Caco-2 (cell line): ENCODE measurements at regions of chr2 and their contacts with region 1.

Region 1: DNA sequence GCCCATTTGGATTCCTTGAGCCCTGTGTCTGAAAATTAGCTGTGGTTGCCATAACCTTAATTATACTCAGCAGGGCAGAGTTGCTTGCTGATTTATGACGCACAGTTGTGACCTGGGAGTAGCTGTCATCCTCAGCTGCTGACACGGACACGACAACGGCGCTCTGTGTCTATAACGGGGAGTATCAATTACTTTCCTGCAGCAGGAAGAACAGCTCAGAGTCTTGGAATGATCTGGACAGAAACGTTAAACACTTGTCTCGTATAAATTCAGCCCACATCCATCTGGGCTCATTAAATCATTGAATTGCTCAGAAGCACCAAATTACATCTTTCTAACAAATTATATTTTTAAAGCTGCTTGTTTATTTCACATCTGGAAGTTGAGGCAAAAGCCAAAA is 116.3 kb downstream of the SEPTIN10 start:
- DNase-seq: no peak
- H3K4me3 ChIP-seq: no peak overlapping the region
- H3K4me3 Mint-ChIP-seq: no peak overlapping the region
- H3K27ac Mint-ChIP-seq: no peak overlapping the region
- H3K4me1 ChIP-seq: no peaks in the 10 kb centered on the region
- H3K4me1 Mint-ChIP-seq: peaks cover 7% of the 10 kb centered on the region
- H3K27me3 ChIP-seq: no peaks in the 10 kb centered on the region
- H3K27me3 Mint-ChIP-seq: peaks cover 3% of the 10 kb centered on the region
- CTCF ChIP-seq: no peak

Region 2: GRCh38 chr2:109260886-109261700 is 236.4 kb before region 1 on chr2:
- CTCF ChIA-PET with region 1: no interaction called
- POLR2A ChIA-PET with region 1: no interaction called
- intact Hi-C with region 1: no loop called
- DNase-seq: no peak
- H3K4me3 ChIP-seq: no peak overlapping the region
- H3K4me3 Mint-ChIP-seq: no peak overlapping the region
- H3K27ac Mint-ChIP-seq: no peak overlapping the region
- H3K4me1 ChIP-seq: no peaks in the 10 kb centered on the region
- H3K4me1 Mint-ChIP-seq: peaks cover 7% of the 10 kb centered on the region
- H3K27me3 ChIP-seq: no peaks in the 10 kb centered on the region; the same call in 1 of the 2 replicates
- H3K27me3 Mint-ChIP-seq: peaks cover 3% of the 10 kb centered on the region
- CTCF ChIP-seq: peak; percentile 17 to 49

Region 3: GRCh38 chr2:109475531-109476210 is 21.8 kb before region 1 on chr2:
- CTCF ChIA-PET with region 1: interaction called, 10 read pairs
- POLR2A ChIA-PET with region 1: no interaction called
- intact Hi-C with region 1: no loop called
- DNase-seq: no peak
- H3K4me3 ChIP-seq: no peak overlapping the region
- H3K4me3 Mint-ChIP-seq: no peak overlapping the region
- H3K27ac Mint-ChIP-seq: no peak overlapping the region
- H3K4me1 ChIP-seq: 0 out of 2 replicates have a peak, but pooled peaks cover 3% of the 10 kb centered on the region
- H3K4me1 Mint-ChIP-seq: peaks cover 1% of the 10 kb centered on the region
- H3K27me3 ChIP-seq: no peaks in the 10 kb centered on the region
- H3K27me3 Mint-ChIP-seq: peaks cover 4% of the 10 kb centered on the region
- CTCF ChIP-seq: no peak

Region 4: DNA sequence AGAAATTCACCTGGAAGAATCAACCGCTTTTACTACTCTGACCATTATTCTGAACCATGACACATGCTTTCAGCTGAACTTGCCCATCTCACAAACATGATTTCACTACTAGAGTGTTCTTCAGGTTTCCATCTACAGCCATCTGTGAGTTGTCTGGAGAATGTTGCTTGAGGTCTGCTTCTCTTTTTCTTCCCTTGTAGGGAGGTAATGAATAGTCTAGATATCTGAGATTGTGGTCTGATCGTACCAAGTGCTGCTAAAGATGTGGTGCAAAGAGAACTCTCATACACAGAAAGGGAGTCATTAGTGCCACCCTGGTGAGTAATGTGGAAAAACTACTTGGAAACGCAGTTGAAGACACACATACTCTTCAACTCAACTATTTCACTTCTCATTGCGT is 126.9 kb after region 1 on chr2:
- CTCF ChIA-PET with region 1: no interaction called
- POLR2A ChIA-PET with region 1: no interaction called
- intact Hi-C with region 1: no loop called
- DNase-seq: no peak
- H3K4me3 ChIP-seq: no peak overlapping the region
- H3K4me3 Mint-ChIP-seq: peak overlapping the region; percentile 50
- H3K27ac Mint-ChIP-seq: peak overlapping the region; percentile 73
- H3K4me1 ChIP-seq: peaks cover 30% of the 10 kb centered on the region
- H3K4me1 Mint-ChIP-seq: peaks cover 27% of the 10 kb centered on the region
- H3K27me3 ChIP-seq: no peaks in the 10 kb centered on the region
- H3K27me3 Mint-ChIP-seq: no peaks in the 10 kb centered on the region
- CTCF ChIP-seq: no peak